A673 (cell line): ENCODE measurements at regions of chr10 and their contacts with region 1.

Region 1: GRCh38 chr10:68318331-68319059 is 13.4 kb upstream of the HNRNPH3 start:
- DNase-seq: no peak
- H3K4me3 ChIP-seq: no peak overlapping the region
- H3K27ac ChIP-seq: no peak overlapping the region
- H3K4me1 ChIP-seq: no peaks in the 10 kb centered on the region
- H3K27me3 ChIP-seq: no peaks in the 10 kb centered on the region
- CTCF ChIP-seq: no peak

Region 2: DNA sequence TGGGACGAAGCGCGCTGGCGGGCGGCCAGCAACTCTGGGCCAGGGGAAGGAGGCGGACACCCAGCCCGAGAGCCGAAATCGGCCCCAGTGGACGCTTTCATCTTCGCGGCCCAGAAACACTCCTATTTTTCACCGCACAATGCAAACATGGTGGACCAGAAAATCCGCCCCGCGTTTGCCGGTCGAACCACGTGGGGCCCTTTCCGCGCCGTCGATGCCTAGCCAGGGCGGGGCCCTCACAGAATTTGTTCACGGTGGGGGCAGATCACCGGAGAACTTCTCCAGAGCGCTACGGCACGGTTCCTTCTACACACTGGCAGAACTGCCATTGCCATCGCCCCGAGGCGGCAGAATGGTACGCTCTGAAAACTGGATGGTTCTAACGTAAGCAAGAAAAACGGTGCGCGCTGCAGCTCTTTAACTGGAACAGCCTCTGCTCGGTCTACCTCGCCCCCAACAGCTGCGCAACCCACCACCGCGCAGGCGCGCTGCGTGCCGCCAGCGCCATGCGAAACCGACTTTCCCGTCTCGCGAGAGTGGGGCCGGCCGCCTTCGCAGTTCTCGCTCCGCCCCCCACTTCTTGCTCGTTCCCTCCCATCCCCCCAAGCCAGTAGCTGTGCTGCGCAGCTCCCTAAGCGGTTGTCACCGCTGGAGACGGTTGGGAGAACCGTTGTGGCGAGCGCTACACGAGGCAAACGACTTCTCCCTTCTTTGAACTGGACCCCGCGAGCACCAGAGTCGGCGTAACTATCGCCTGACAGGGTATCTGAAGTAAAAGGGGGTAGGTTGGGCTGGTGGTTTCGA is 13.2 kb after region 1 on chr10 and contains the start of gene HNRNPH3:
- CTCF ChIA-PET with region 1: no interaction called
- POLR2A ChIA-PET with region 1: interaction called, 15 read pairs
- intact Hi-C with region 1: no loop called
- DNase-seq: peak; percentile 99
- H3K4me3 ChIP-seq: peak within 1 kb of the TSS; percentile 94
- H3K27ac ChIP-seq: peak within 1 kb of the TSS; percentile 99
- H3K4me1 ChIP-seq: peaks cover 50% of the 10 kb centered on the region
- H3K27me3 ChIP-seq: no peaks in the 10 kb centered on the region
- CTCF ChIP-seq: no peak
- total RNA-seq, gene HNRNPH3: 237 and 251 TPM in 2 replicates

Region 3: DNA sequence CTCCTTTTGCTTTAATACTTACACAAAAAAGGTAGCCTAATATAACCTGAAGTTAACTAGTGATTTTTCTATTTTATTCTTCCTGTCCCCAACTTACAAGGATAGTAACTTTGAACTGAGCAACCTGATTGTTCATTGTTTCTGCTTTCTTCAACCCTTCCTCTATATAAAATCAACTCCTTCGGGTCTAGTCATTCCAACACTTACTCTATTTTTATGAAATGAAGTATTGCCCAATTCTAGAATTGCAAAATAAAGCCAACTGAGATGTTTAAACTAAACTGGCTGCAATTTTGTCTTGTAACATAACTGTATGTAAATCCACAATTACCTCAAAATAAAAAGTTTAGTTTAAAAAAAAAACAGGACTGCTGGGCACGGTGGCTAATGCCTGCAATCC is 173.6 kb after region 1 on chr10:
- CTCF ChIA-PET with region 1: no interaction called
- POLR2A ChIA-PET with region 1: no interaction called
- intact Hi-C with region 1: no loop called
- DNase-seq: no peak
- H3K4me3 ChIP-seq: no peak overlapping the region
- H3K27ac ChIP-seq: no peak overlapping the region
- H3K4me1 ChIP-seq: no peaks in the 10 kb centered on the region
- H3K27me3 ChIP-seq: no peaks in the 10 kb centered on the region
- CTCF ChIP-seq: no peak